ENCODE measurements at regions of chr6 and their contacts with region 1.

Region 1: DNA sequence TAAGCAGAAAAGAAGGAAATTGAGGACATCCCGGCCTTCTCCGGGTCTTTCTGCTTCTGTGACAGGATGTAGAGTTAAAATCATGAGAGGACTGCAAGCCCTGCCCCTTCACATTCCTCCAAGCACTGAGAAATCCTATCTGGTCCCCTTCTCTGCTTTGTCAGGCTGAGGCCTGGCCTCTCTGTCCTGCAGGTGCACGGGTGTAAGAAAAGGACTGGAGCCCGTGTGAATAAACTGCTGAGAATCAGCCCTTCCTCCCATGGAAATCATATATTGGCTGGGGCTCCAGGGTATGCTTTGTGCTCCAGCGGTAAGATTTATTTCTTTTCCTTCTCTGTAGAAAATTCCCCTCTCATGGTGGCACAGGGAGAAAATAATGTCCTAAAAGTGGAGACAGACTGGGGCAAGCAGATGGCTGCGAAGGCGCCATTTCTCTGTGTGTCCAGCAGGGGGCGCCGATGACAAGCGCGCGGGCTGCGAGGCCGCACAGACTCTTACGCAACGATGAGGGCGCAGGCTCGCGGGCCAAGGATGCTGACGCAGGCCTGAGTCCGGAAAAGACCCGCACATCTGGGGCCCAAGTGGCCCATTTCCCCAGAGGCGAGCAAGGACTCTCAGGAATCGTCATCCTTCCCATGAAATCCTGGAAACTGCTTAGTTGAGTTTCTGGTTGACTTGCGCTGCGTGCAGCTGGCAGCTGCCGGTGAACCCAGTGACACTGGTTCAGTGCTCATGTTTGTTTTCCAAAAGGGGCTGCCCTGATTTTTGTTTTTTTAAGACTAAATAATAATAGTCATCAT is 258.6 kb downstream of the ADGB start:
- DNase-seq: peak; percentile 41 to 85 (median 64)
- ATAC-seq: peak; percentile 84
- H3K4me3 ChIP-seq: peak overlapping the region; percentile 26
- H3K4me3 Mint-ChIP-seq: no peak overlapping the region
- H3K27ac ChIP-seq: no peak overlapping the region
- H3K27ac Mint-ChIP-seq: no peak overlapping the region
- H3K4me1 ChIP-seq: peaks cover 7% of the 10 kb centered on the region
- H3K4me1 Mint-ChIP-seq: no peaks in the 10 kb centered on the region
- H3K27me3 ChIP-seq: no peaks in the 10 kb centered on the region
- H3K27me3 Mint-ChIP-seq: peaks cover 3% of the 10 kb centered on the region
- CTCF ChIP-seq: peak; percentile 96

Region 2: GRCh38 chr6:146598772-146599405 is 258.5 kb before region 1 on chr6 and contains the start of gene ADGB:
- CTCF ChIA-PET with region 1: no interaction called
- POLR2A ChIA-PET with region 1: no interaction called
- intact Hi-C with region 1: no loop called
- DNase-seq: peak in 2 of 14 experiments; percentile 17 to 23
- ATAC-seq: no peak
- H3K4me3 ChIP-seq: no peak within 1 kb of the TSS
- H3K4me3 Mint-ChIP-seq: no peak within 1 kb of the TSS
- H3K27ac ChIP-seq: no peak within 1 kb of the TSS
- H3K27ac Mint-ChIP-seq: no peak within 1 kb of the TSS
- H3K4me1 ChIP-seq: peaks cover 3% of the 10 kb centered on the region
- H3K4me1 Mint-ChIP-seq: peaks cover 6% of the 10 kb centered on the region
- H3K27me3 ChIP-seq: peaks cover 0 to 5% of the 10 kb centered on the region in 2 experiments
- H3K27me3 Mint-ChIP-seq: peaks cover 26% of the 10 kb centered on the region
- CTCF ChIP-seq: no peak
- total RNA-seq, gene ADGB: not detected

Region 3: DNA sequence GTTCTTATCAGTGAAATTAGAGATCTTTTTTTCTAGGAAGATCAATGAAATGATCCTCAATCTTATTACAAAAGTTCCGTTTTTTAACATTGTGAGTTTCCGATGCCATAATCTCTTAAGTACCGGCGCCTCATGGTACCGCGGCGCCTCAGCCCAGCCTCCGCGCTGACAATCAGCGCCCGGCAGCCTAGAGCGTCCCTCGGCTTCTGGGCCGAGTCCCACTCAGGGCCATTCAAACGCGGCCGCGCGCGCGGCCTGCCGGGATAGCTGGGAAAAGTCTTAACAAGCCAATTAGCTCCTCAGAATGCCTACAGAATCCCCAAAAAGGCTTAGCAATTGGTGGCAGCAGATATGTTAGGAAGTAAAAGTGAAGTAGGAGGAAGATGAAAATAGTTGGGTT is 53.8 kb before region 1 on chr6:
- CTCF ChIA-PET with region 1: no interaction called
- POLR2A ChIA-PET with region 1: no interaction called
- intact Hi-C with region 1: no loop called
- DNase-seq: no peak
- ATAC-seq: no peak
- H3K4me3 ChIP-seq: no peak overlapping the region
- H3K4me3 Mint-ChIP-seq: no peak overlapping the region
- H3K27ac ChIP-seq: no peak overlapping the region
- H3K27ac Mint-ChIP-seq: no peak overlapping the region
- H3K4me1 ChIP-seq: no peaks in the 10 kb centered on the region
- H3K4me1 Mint-ChIP-seq: no peaks in the 10 kb centered on the region
- H3K27me3 ChIP-seq: no peaks in the 10 kb centered on the region
- H3K27me3 Mint-ChIP-seq: no peaks in the 10 kb centered on the region
- CTCF ChIP-seq: no peak

Region 4: DNA sequence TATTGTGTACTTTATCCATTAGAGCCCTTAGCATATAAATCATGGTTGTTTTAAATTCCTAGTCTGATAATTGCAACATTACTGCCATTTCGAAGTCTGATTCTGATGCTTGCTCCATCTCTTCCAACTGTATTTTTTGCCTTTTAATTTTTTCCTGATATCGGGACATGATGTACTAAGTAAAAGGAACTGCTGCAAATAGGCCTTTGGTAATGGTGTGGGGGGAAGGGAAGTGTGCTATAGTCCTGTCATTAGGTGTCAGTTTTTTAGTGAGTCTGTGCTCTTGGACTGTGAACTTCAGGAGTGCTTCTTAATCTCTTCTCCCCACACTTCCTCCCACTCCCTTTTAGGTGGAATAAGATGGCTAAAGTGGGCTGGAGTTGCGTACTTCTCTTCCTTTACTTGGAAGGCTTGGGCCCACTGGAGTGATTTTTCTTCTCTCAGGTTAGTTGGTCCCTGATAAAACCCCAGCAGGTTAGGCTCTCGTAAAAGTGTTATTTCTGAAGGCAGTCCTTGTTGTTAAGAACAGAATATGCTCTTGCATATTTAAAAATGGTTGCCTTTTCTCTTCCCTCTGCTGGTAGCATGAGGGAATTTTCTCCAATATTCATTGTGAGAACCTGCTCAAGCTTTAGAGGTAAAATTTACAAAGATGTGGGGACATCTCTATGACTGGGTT is 364.9 kb after region 1 on chr6:
- CTCF ChIA-PET with region 1: no interaction called
- POLR2A ChIA-PET with region 1: no interaction called
- intact Hi-C with region 1: loop called in 1 of 2 experiments (anchors 5 kb)
- DNase-seq: peak in 3 of 14 experiments; percentile 28 to 42 (median 41)
- ATAC-seq: peak; percentile 75
- H3K4me3 ChIP-seq: no peak overlapping the region
- H3K4me3 Mint-ChIP-seq: no peak overlapping the region
- H3K27ac ChIP-seq: no peak overlapping the region
- H3K27ac Mint-ChIP-seq: no peak overlapping the region
- H3K4me1 ChIP-seq: no peaks in the 10 kb centered on the region
- H3K4me1 Mint-ChIP-seq: peaks cover 58% of the 10 kb centered on the region
- H3K27me3 ChIP-seq: no peaks in the 10 kb centered on the region
- H3K27me3 Mint-ChIP-seq: no peaks in the 10 kb centered on the region
- CTCF ChIP-seq: peak; percentile 37

Region 5: DNA sequence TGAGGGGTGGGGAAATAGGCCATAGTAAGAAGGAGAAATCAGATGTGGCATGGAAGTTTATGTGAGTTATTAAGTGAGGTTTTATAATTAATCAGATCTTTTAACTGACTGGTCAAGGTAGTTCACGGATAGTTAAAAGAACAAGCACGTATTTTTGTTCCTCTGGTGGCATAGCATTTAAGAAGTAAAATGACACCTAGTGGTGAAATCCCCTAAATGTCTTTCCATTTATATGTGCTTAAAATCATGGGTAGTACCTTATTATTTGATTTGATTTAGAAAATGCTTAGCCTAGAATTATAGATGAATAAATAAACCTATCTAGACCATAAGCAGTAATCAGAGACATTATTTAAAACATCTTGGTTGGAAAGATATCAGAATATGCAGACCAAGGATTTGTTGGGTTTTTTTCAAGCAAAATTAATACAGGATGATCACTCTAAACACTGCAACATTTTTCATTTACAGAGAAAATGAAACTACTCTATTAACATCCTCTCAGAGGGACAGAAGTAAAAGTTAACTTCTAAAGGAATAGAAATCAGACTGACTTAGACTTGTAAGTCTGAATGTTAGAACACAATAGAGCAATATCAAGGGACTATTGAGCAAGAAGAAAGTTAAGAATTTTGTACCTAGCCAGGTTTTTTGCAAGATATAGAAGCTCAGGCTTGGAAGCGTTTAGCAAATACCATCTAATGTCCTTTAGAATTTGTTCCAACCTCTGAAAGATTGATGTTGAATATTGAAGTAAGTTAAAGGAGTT is 427.9 kb after region 1 on chr6:
- CTCF ChIA-PET with region 1: no interaction called
- POLR2A ChIA-PET with region 1: no interaction called
- intact Hi-C with region 1: loop called (anchors 1 kb)
- DNase-seq: peak in 3 of 14 experiments; percentile 41 to 50 (median 48)
- ATAC-seq: no peak
- H3K4me3 ChIP-seq: no peak overlapping the region
- H3K4me3 Mint-ChIP-seq: no peak overlapping the region
- H3K27ac ChIP-seq: no peak overlapping the region
- H3K27ac Mint-ChIP-seq: peak overlapping the region; percentile 2
- H3K4me1 ChIP-seq: no peaks in the 10 kb centered on the region
- H3K4me1 Mint-ChIP-seq: peaks cover 27% of the 10 kb centered on the region
- H3K27me3 ChIP-seq: no peaks in the 10 kb centered on the region
- H3K27me3 Mint-ChIP-seq: no peaks in the 10 kb centered on the region
- CTCF ChIP-seq: peak; percentile 77

Region 6: GRCh38 chr6:148166339-148166968 is 1309.1 kb after region 1 on chr6:
- CTCF ChIA-PET with region 1: no interaction called
- POLR2A ChIA-PET with region 1: no interaction called
- intact Hi-C with region 1: loop called (anchors 2 kb)
- DNase-seq: peak in 3 of 14 experiments; percentile 40 to 56 (median 50)
- ATAC-seq: no peak
- H3K4me3 ChIP-seq: no peak overlapping the region
- H3K4me3 Mint-ChIP-seq: no peak overlapping the region
- H3K27ac ChIP-seq: no peak overlapping the region
- H3K27ac Mint-ChIP-seq: no peak overlapping the region
- H3K4me1 ChIP-seq: no peaks in the 10 kb centered on the region
- H3K4me1 Mint-ChIP-seq: no peaks in the 10 kb centered on the region
- H3K27me3 ChIP-seq: no peaks in the 10 kb centered on the region
- H3K27me3 Mint-ChIP-seq: peaks cover 19% of the 10 kb centered on the region
- CTCF ChIP-seq: peak; percentile 66

Region 7: DNA sequence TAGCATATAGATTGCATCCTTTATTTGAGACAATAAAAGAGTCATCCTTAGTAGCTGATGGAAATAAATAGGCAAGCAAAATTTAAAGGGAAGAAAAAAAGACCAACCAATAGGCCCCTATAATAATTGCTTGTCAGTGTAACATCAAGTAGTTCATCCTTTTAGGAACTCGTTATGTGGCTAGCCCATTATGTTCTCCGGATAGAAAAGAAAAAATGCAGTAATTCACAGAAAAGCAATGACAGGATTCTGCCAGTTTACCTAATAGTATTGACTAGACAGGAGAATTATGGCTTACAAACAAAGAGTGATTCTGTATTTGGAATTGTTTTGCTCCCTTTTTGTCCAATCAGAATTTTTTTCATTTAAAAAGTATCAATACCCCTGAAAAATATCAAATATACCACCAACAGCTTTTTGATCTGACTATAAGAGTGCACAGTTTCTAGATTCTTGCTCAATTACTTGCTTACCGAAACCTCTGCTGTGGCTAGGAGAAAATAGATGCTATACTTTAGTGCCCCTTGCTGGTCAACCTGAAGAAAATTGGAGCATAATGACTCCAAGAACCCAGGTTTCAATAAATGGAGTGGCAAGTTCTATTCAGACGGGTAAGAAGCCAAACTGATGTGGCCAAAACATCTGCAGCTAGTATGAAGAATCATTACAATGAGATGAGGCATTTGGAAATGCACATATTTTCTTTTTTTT is 1393.8 kb after region 1 on chr6:
- CTCF ChIA-PET with region 1: no interaction called
- POLR2A ChIA-PET with region 1: no interaction called
- intact Hi-C with region 1: loop called in 1 of 2 experiments (anchors 5 kb)
- DNase-seq: peak in 3 of 14 experiments; percentile 21 to 39 (median 39)
- ATAC-seq: no peak
- H3K4me3 ChIP-seq: no peak overlapping the region
- H3K4me3 Mint-ChIP-seq: no peak overlapping the region
- H3K27ac ChIP-seq: no peak overlapping the region
- H3K27ac Mint-ChIP-seq: no peak overlapping the region
- H3K4me1 ChIP-seq: no peaks in the 10 kb centered on the region
- H3K4me1 Mint-ChIP-seq: no peaks in the 10 kb centered on the region
- H3K27me3 ChIP-seq: no peaks in the 10 kb centered on the region
- H3K27me3 Mint-ChIP-seq: peaks cover 30% of the 10 kb centered on the region
- CTCF ChIP-seq: peak; percentile 23

Region 8: DNA sequence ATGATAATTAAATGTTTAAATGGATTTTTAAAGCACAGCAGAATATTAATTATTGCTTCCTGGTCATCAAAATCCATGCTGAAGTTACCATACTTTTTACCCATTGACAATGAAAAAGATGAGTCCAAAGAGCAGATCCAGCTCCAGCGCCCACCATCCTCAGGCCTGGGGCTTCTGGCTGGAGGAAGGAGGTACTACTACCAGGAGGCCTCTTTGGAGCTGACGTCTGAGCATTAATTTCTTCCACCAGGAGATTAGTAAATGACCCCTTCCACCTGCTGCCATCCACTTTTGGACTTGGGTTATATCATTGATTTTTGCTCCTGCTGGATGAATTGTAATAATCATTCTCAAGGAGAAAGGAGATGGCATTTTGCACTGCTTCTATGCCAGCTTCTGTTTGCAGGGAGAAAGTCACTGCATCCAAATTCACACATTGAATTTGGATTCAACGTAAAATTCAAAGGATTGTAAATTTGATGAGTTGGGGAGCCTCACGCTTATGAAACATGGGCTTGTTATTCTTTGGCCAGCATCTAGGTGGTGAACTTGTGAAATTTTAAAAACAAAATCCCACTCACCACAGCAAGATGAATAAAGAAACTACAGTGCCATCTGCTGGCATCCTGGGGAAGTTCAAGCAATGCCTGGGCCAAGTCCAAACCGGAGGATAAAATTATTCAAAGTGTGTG is 1607.1 kb after region 1 on chr6:
- CTCF ChIA-PET with region 1: no interaction called
- POLR2A ChIA-PET with region 1: no interaction called
- intact Hi-C with region 1: loop called (anchors 2 to 5 kb)
- DNase-seq: peak in 13 of 14 experiments; percentile 19 to 68 (median 28)
- ATAC-seq: peak; percentile 49
- H3K4me3 ChIP-seq: no peak overlapping the region
- H3K4me3 Mint-ChIP-seq: no peak overlapping the region
- H3K27ac ChIP-seq: no peak overlapping the region
- H3K27ac Mint-ChIP-seq: no peak overlapping the region
- H3K4me1 ChIP-seq: peaks cover 3% of the 10 kb centered on the region
- H3K4me1 Mint-ChIP-seq: no peaks in the 10 kb centered on the region
- H3K27me3 ChIP-seq: peaks cover 0 to 5% of the 10 kb centered on the region in 2 experiments
- H3K27me3 Mint-ChIP-seq: peaks cover 27% of the 10 kb centered on the region
- CTCF ChIP-seq: peak; percentile 93